Naive thymus-derived CD4-positive, alpha-beta T cell (primary cell): ENCODE measurements at regions of chr14 and their contacts with region 1.

Region 1: GRCh38 chr14:54742492-54743350 is 159.9 kb downstream of the GCH1 start:
- DNase-seq: peak in 5 of 9 donors; percentile 1 to 23 (median 17)
- ATAC-seq: no peak
- H3K4me3 ChIP-seq: no peak overlapping the region
- H3K4me3 Mint-ChIP-seq: peak overlapping the region in 8 of 10 donors; percentile 8 to 67 (median 50)
- H3K27ac ChIP-seq: no peak overlapping the region
- H3K27ac Mint-ChIP-seq: peak overlapping the region; percentile 1 to 62 (median 44)
- H3K4me1 ChIP-seq: peaks cover 0 to 25% of the 10 kb centered on the region in 2 donors
- H3K4me1 Mint-ChIP-seq: peaks cover 19 to 54% (median 44%) of the 10 kb centered on the region in 7 donors
- H3K27me3 ChIP-seq: no peaks in the 10 kb centered on the region
- H3K27me3 Mint-ChIP-seq: peaks cover 0 to 11% (median 0%) of the 10 kb centered on the region in 5 donors

Region 2: GRCh38 chr14:54450535-54450934 is 292.2 kb before region 1 on chr14:
- CTCF ChIA-PET with region 1: no interaction called
- POLR2A ChIA-PET with region 1: no interaction called
- intact Hi-C with region 1: no loop called
- DNase-seq: no peak
- ATAC-seq: peak; percentile 80
- H3K4me3 ChIP-seq: no peak overlapping the region
- H3K4me3 Mint-ChIP-seq: no peak overlapping the region
- H3K27ac ChIP-seq: no peak overlapping the region
- H3K27ac Mint-ChIP-seq: no peak overlapping the region
- H3K4me1 ChIP-seq: no peaks in the 10 kb centered on the region
- H3K4me1 Mint-ChIP-seq: peaks cover 0 to 5% (median 0%) of the 10 kb centered on the region in 7 donors
- H3K27me3 ChIP-seq: no peaks in the 10 kb centered on the region
- H3K27me3 Mint-ChIP-seq: peaks cover 0 to 12% (median 4%) of the 10 kb centered on the region in 5 donors

Region 3: GRCh38 chr14:54691525-54692283 is 51.0 kb before region 1 on chr14:
- CTCF ChIA-PET with region 1: no interaction called
- POLR2A ChIA-PET with region 1: no interaction called
- intact Hi-C with region 1: loop called in 1 of 2 experiments (anchors 5 kb)
- DNase-seq: peak in 5 of 9 donors; percentile 4 to 30 (median 24)
- ATAC-seq: peak; percentile 63
- H3K4me3 ChIP-seq: no peak overlapping the region
- H3K4me3 Mint-ChIP-seq: no peak overlapping the region
- H3K27ac ChIP-seq: no peak overlapping the region
- H3K27ac Mint-ChIP-seq: no peak overlapping the region
- H3K4me1 ChIP-seq: no peaks in the 10 kb centered on the region
- H3K4me1 Mint-ChIP-seq: peaks cover 0 to 19% (median 0%) of the 10 kb centered on the region in 7 donors
- H3K27me3 ChIP-seq: no peaks in the 10 kb centered on the region
- H3K27me3 Mint-ChIP-seq: peaks cover 11 to 29% (median 20%) of the 10 kb centered on the region in 5 donors

Region 4: GRCh38 chr14:54730156-54730961 is 12.4 kb before region 1 on chr14:
- CTCF ChIA-PET with region 1: no interaction called
- POLR2A ChIA-PET with region 1: interaction called, 3 read pairs
- intact Hi-C with region 1: loop called in 1 of 2 experiments (anchors 1 kb)
- DNase-seq: peak in 3 of 9 donors; percentile 1 to 46 (median 16)
- ATAC-seq: peak; percentile 75
- H3K4me3 ChIP-seq: peak overlapping the region; percentile 1
- H3K4me3 Mint-ChIP-seq: peak overlapping the region; percentile 27 to 77 (median 70)
- H3K27ac ChIP-seq: no peak overlapping the region
- H3K27ac Mint-ChIP-seq: peak overlapping the region in 7 of 9 donors; percentile 4 to 85 (median 28)
- H3K4me1 ChIP-seq: peaks cover 0 to 6% of the 10 kb centered on the region in 2 donors
- H3K4me1 Mint-ChIP-seq: peaks cover 8 to 43% (median 19%) of the 10 kb centered on the region in 7 donors
- H3K27me3 ChIP-seq: peaks cover 0 to 3% of the 10 kb centered on the region in 2 donors
- H3K27me3 Mint-ChIP-seq: peaks cover 0 to 41% (median 9%) of the 10 kb centered on the region in 5 donors